PC-9 (cell line): ENCODE measurements at regions of chr2 and their contacts with region 1.

Region 1: GRCh38 chr2:45650851-45651414 is 542 bp upstream of the PRKCE start:
- DNase-seq: peak; percentile 90 to 92
- H3K4me3 ChIP-seq: peak overlapping the region; percentile 94
- H3K27ac ChIP-seq: peak overlapping the region; percentile 67
- H3K4me1 ChIP-seq: peaks cover 20% of the 10 kb centered on the region
- H3K27me3 ChIP-seq: no peaks in the 10 kb centered on the region
- CTCF ChIP-seq: peak; percentile 34; the same call in 1 of the 2 replicates

Region 2: GRCh38 chr2:45244928-45245327 is 406.0 kb before region 1 on chr2:
- CTCF ChIA-PET with region 1: no interaction called
- POLR2A ChIA-PET with region 1: no interaction called
- intact Hi-C with region 1: no loop called
- DNase-seq: peak in 1 of 2 experiments; percentile 24
- H3K4me3 ChIP-seq: no peak overlapping the region
- H3K27ac ChIP-seq: no peak overlapping the region
- H3K4me1 ChIP-seq: peaks cover 25% of the 10 kb centered on the region
- H3K27me3 ChIP-seq: no peaks in the 10 kb centered on the region
- CTCF ChIP-seq: no peak

Region 3: DNA sequence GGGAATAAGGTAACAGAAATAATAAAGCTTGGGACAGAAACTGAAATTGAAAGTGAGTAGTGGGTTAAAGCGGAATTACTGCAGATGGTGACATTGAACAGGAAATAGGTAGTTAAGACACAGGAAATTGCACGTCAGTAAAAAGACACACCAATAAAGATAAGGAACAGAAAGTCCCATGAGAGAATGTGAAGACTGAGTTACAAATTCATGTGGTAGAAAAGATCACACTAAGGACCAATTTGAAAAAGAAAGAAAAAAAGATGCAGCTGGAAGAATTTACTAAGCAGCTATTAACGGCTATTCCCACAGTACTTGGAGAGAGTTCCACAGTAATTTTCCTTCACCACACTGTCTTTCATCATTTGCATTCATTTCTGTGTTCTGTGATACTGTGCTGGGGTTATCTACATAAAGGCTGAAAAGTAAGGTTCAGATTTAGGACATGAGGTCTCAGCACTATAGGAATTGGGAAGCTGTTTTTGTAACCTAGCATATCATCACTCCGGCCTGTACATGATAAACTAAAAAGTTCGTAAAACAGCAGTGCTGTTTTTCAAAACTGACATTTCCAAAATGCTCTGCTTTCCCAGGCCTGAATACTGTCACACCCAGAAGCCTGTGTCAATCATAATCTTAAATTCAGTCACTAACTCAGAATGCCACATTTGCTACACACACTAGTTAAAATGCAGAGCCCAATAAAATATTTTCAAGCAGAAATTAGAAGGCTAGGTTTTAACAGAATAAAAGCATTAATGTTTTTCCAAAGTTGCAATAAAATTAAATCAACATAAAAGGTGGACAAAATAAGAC is 82.8 kb before region 1 on chr2:
- CTCF ChIA-PET with region 1: no interaction called
- POLR2A ChIA-PET with region 1: no interaction called
- intact Hi-C with region 1: no loop called
- DNase-seq: no peak
- H3K4me3 ChIP-seq: no peak overlapping the region
- H3K27ac ChIP-seq: no peak overlapping the region
- H3K4me1 ChIP-seq: no peaks in the 10 kb centered on the region
- H3K27me3 ChIP-seq: no peaks in the 10 kb centered on the region
- CTCF ChIP-seq: no peak

Region 4: GRCh38 chr2:45712570-45712969 is 61.6 kb after region 1 on chr2:
- CTCF ChIA-PET with region 1: interaction called, 7 read pairs
- POLR2A ChIA-PET with region 1: no interaction called
- intact Hi-C with region 1: loop called (anchors 2 kb)
- DNase-seq: peak; percentile 14 to 66
- H3K4me3 ChIP-seq: no peak overlapping the region
- H3K27ac ChIP-seq: no peak overlapping the region
- H3K4me1 ChIP-seq: peaks cover 9% of the 10 kb centered on the region
- H3K27me3 ChIP-seq: no peaks in the 10 kb centered on the region
- CTCF ChIP-seq: peak; percentile 57

Region 5: DNA sequence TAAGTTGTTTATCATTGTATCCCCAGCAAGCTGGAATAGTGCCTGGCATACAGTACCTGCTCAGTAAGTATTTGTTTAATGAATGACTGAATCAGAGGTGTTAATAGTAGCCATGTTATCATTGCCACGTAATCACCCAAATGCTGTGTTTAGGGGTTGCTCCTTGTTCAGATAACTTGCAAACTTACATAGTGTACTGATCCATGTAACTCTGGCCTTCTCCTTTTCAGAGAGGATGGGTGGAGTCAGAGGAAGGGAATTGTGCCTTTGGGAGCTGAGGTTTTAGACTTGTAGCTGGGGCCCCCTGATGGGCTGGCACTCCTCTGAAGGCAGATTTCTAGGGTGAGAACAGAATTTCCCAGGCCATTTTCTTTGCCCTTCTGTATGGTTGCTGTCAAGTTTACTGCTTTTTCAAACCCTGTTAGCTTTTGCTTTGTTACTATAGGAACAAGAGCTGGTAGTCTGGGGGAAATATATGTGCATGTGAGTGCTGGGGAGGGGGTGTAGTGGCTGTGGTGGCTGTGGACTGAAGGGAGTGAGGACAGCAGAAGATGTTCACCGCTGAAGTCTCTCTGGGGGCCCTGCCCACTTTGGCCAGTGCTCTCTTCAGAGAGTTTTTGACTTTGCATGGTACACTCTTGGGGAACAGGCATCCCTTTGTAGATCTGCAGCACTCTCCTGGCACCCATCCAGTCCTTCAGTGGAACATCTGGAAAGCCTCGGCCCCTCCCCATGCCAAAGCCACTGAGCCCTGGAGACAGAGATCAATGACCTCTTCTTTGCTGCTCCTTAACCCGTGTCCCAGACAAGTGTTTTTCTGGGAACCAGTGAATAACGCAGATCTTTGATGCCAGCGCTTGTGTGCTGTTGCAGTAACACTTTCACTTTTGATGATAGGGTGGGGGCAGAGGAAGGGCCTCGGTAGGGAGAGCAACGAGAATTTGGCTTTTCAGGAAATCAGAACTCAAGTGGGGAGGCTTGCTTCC is 209.5 kb after region 1 on chr2:
- CTCF ChIA-PET with region 1: no interaction called
- POLR2A ChIA-PET with region 1: interaction called, 3 read pairs
- intact Hi-C with region 1: loop called (anchors 5 kb)
- DNase-seq: no peak
- H3K4me3 ChIP-seq: no peak overlapping the region
- H3K27ac ChIP-seq: no peak overlapping the region
- H3K4me1 ChIP-seq: no peaks in the 10 kb centered on the region
- H3K27me3 ChIP-seq: no peaks in the 10 kb centered on the region
- CTCF ChIP-seq: no peak

Region 6: GRCh38 chr2:45922571-45922988 is 271.6 kb after region 1 on chr2:
- CTCF ChIA-PET with region 1: no interaction called
- POLR2A ChIA-PET with region 1: no interaction called
- intact Hi-C with region 1: loop called (anchors 5 kb)
- DNase-seq: peak; percentile 33 to 61
- H3K4me3 ChIP-seq: no peak overlapping the region
- H3K27ac ChIP-seq: no peak overlapping the region
- H3K4me1 ChIP-seq: peaks cover 23% of the 10 kb centered on the region
- H3K27me3 ChIP-seq: no peaks in the 10 kb centered on the region
- CTCF ChIP-seq: no peak

Region 7: GRCh38 chr2:47288864-47289263 is 1637.9 kb after region 1 on chr2:
- CTCF ChIA-PET with region 1: no interaction called
- POLR2A ChIA-PET with region 1: interaction called, 23 read pairs
- intact Hi-C with region 1: no loop called
- DNase-seq: peak in 1 of 2 experiments; percentile 89
- H3K4me3 ChIP-seq: no peak overlapping the region
- H3K27ac ChIP-seq: peak overlapping the region; percentile 32
- H3K4me1 ChIP-seq: peaks cover 26% of the 10 kb centered on the region
- H3K27me3 ChIP-seq: no peaks in the 10 kb centered on the region
- CTCF ChIP-seq: no peak